Calu3 (cell line): ENCODE measurements at regions of chr7 and their contacts with region 1.

Region 1: GRCh38 chr7:66474441-66474840 is 154.2 kb upstream of the KCTD7 start:
- DNase-seq: no peak
- H3K4me3 Mint-ChIP-seq: no peak overlapping the region
- H3K27ac Mint-ChIP-seq: no peak overlapping the region
- H3K4me1 Mint-ChIP-seq: no peaks in the 10 kb centered on the region
- H3K27me3 Mint-ChIP-seq: no peaks in the 10 kb centered on the region
- CTCF ChIP-seq: no peak

Region 2: GRCh38 chr7:65989694-65990080 is 484.8 kb before region 1 on chr7:
- CTCF ChIA-PET with region 1: no interaction called
- intact Hi-C with region 1: no loop called
- DNase-seq: no peak
- H3K4me3 Mint-ChIP-seq: no peak overlapping the region
- H3K27ac Mint-ChIP-seq: no peak overlapping the region
- H3K4me1 Mint-ChIP-seq: no peaks in the 10 kb centered on the region
- H3K27me3 Mint-ChIP-seq: no peaks in the 10 kb centered on the region
- CTCF ChIP-seq: no peak

Region 3: DNA sequence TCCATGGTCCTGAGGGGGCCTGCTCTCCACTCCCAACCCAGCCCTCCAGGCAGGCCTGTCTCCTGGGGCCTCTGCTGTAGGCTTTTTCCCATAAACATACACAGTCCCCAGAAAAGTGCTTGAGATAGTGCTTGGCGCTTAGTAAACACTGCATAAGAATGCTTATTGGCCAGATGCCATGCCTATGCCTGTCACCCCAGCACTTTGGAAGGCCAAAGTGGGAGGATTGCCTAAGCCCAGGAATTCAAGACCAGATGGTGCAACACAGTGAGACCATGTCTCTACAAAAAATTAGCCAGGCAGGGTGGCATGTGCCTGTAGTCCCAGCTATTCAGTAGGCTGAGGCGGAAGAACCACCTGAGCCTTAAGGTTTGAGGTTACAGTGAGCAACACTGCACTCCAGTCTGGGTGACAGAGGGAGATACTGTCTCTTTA is 423.4 kb before region 1 on chr7:
- CTCF ChIA-PET with region 1: interaction called, 10 read pairs
- intact Hi-C with region 1: no loop called
- DNase-seq: peak; percentile 65
- H3K4me3 Mint-ChIP-seq: no peak overlapping the region
- H3K27ac Mint-ChIP-seq: no peak overlapping the region
- H3K4me1 Mint-ChIP-seq: no peaks in the 10 kb centered on the region
- H3K27me3 Mint-ChIP-seq: no peaks in the 10 kb centered on the region
- CTCF ChIP-seq: no peak

Region 4: DNA sequence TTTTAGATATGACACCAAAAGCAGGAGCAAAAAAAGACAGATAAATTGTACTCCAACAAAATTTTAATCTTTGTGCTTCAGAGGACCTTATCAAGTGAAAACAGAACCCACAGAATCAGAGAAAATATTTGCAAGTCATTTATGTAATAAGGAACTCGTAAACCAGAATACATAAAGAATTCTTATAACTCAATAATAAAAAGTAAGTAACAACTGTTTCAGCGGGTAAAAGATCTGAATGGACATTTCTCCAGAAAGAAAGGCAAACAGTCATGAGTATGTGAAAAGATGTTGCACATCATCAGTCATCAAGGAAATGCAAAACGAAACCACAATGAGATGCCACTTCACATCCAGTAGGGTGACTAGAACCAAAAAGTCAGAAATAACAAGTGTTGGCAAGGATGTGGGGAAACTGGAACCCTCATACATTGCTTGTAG is 13.5 kb before region 1 on chr7:
- CTCF ChIA-PET with region 1: no interaction called
- intact Hi-C with region 1: no loop called
- DNase-seq: no peak
- H3K4me3 Mint-ChIP-seq: no peak overlapping the region
- H3K27ac Mint-ChIP-seq: no peak overlapping the region
- H3K4me1 Mint-ChIP-seq: no peaks in the 10 kb centered on the region
- H3K27me3 Mint-ChIP-seq: no peaks in the 10 kb centered on the region
- CTCF ChIP-seq: no peak